ENCODE measurements at regions of chr6 and their contacts with region 1.

Region 1: DNA sequence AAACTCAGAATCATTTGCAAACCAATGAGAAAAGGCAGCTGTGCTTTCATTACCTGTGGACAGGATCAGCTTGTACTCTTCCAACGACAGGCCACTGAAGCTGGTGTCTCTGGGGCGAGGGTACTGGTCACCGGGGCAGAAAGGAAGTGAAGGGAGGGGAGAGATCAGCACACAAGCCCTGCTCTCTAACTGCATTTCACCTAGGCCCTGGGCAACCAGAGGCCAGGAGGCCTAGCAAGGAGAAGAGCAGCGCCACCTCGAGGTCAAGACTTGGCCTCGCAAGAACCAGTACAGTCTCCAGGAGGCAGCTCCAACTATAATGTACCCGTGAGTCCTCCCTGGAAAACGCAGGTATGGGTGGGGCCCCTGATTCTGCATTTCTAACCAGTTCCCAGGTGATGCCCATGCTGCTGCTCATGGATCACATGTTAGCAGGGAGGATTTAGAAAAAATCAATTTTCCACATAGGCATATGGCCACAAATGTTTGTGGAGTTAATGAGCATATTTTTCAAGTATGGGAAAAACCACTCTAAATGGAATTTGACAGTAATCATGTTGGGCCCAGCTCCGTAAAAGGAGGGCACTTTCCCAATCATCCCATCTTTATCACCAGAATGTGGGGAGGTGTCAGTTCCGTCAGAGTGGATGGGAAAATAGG is 11.0 kb downstream of the UQCC2 start:
- DNase-seq: peak; percentile 63 to 84
- H3K4me3 ChIP-seq: no peak overlapping the region
- H3K27ac ChIP-seq: no peak overlapping the region
- H3K4me1 ChIP-seq: peaks cover 0 to 5% (median 0%) of the 10 kb centered on the region in 4 experiments; a peak in 2 of 7 replicates
- H3K27me3 ChIP-seq: no peaks in the 10 kb centered on the region
- CTCF ChIP-seq: peak in 2 of 3 experiments; percentile 92 to 98; a peak in 3 of 4 replicates
- EP300 ChIP-seq: no peak
- POLR2A ChIP-seq: no peak
- RAD21 ChIP-seq: peak; percentile 80 to 82

Region 2: DNA sequence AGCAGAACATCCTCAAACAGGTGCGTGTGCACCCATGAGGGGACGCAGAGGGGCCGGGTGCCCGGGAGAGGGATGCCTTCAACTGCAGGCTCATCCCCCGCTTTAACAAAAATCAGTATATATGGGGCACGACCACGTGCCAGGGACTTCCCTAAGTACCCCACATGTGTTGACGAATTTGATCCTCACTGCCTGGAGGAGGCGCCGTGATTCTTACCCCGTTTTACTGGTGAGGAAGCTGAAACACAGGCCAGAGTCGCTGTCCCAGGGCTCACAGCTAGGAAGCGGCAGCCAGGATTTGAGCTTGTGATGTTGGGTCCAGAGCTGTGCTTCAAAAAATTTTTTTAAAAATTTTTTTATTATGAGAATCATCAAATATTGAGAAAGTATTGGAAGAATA is 34.6 kb before region 1 on chr6:
- CTCF ChIA-PET with region 1: interaction called, 17 read pairs
- POLR2A ChIA-PET with region 1: no interaction called
- DNase-seq: no peak
- H3K4me3 ChIP-seq: no peak overlapping the region
- H3K27ac ChIP-seq: no peak overlapping the region
- H3K4me1 ChIP-seq: peaks cover 0 to 3% (median 0%) of the 10 kb centered on the region in 4 experiments; a peak in 1 of 7 replicates
- H3K27me3 ChIP-seq: no peaks in the 10 kb centered on the region
- CTCF ChIP-seq: peak in 2 of 3 experiments; percentile 27 to 51; a peak in 3 of 4 replicates
- EP300 ChIP-seq: no peak
- POLR2A ChIP-seq: no peak
- RAD21 ChIP-seq: peak; percentile 7 to 39; a peak in 2 of 4 replicates

Region 3: GRCh38 chr6:33683051-33683571 is 17.4 kb before region 1 on chr6:
- CTCF ChIA-PET with region 1: interaction called, 18 read pairs
- POLR2A ChIA-PET with region 1: interaction called, 6 read pairs
- DNase-seq: no peak
- H3K4me3 ChIP-seq: no peak overlapping the region
- H3K27ac ChIP-seq: no peak overlapping the region
- H3K4me1 ChIP-seq: no peaks in the 10 kb centered on the region
- H3K27me3 ChIP-seq: no peaks in the 10 kb centered on the region
- CTCF ChIP-seq: no peak
- EP300 ChIP-seq: no peak
- POLR2A ChIP-seq: no peak
- RAD21 ChIP-seq: no peak

Region 4: GRCh38 chr6:33711140-33712129 is 10.9 kb after region 1 on chr6 and contains the start of gene UQCC2:
- CTCF ChIA-PET with region 1: interaction called, 28 read pairs
- POLR2A ChIA-PET with region 1: interaction called, 31 read pairs
- DNase-seq: peak; percentile 93 to 96
- H3K4me3 ChIP-seq: peak within 1 kb of the TSS; percentile 59 to 86 (median 77)
- H3K27ac ChIP-seq: peak within 1 kb of the TSS; percentile 98
- H3K4me1 ChIP-seq: peaks cover 2 to 14% (median 6%) of the 10 kb centered on the region in 4 experiments; a peak in 4 of 7 replicates
- H3K27me3 ChIP-seq: no peaks in the 10 kb centered on the region
- CTCF ChIP-seq: peak; percentile 62 to 76 (median 64)
- EP300 ChIP-seq: no peak
- POLR2A ChIP-seq: peak; percentile 78 to 92
- RAD21 ChIP-seq: peak; percentile 80 to 82
- total RNA-seq, gene UQCC2: 104 and 107 TPM in 2 replicates